ENCODE measurements at regions of chr9 and their contacts with region 1.

Region 1: GRCh38 chr9:70340572-70340971 is 73.9 kb downstream of the KLF9 start:
- DNase-seq: no peak
- H3K4me3 ChIP-seq: no peak overlapping the region
- H3K27ac ChIP-seq: no peak overlapping the region
- H3K4me1 ChIP-seq: peaks cover 0 to 3% (median 0%) of the 10 kb centered on the region in 4 donors
- H3K27me3 ChIP-seq: no peaks in the 10 kb centered on the region
- CTCF ChIP-seq: peak; percentile 53 to 77 (median 60)
- EP300 ChIP-seq: no peak
- POLR2A ChIP-seq: no peak

Region 2: DNA sequence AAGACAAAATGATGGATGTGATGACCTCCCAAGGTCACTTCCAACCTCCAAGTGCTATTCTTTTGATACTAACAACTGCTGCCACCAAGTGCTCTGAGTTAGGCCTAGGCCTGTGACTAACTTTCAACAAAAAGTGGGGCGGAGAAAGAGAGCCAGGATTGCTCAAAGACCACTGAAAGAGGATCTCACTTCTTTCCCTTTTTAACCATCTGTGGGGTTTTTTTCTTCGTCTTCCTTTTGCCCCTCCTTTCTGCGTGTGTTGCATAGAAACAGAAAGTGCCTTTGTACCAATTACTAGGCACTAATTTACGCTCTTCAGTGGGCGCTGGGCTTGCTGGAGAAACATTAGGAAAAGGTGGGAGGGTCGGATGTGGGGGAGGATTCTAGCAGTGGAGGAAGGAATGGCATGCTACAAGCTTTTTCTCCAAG is 65.9 kb after region 1 on chr9:
- in situ Hi-C with region 1: loop called in 2 of 4 experiments (anchors 10 kb)
- intact Hi-C with region 1: no loop called
- DNase-seq: peak; percentile 33
- H3K4me3 ChIP-seq: peak overlapping the region in 1 of 4 donors; percentile 24
- H3K27ac ChIP-seq: peak overlapping the region; percentile 81 to 86 (median 82)
- H3K4me1 ChIP-seq: peaks cover 44 to 92% (median 85%) of the 10 kb centered on the region in 4 donors
- H3K27me3 ChIP-seq: no peaks in the 10 kb centered on the region
- CTCF ChIP-seq: no peak
- EP300 ChIP-seq: no peak
- POLR2A ChIP-seq: no peak

Region 3: GRCh38 chr9:70609542-70610286 is 269.1 kb after region 1 on chr9:
- in situ Hi-C with region 1: loop called in 3 of 4 experiments (anchors 5 to 10 kb)
- intact Hi-C with region 1: loop called (anchors 5 kb)
- DNase-seq: peak; percentile 21
- H3K4me3 ChIP-seq: no peak overlapping the region
- H3K27ac ChIP-seq: no peak overlapping the region
- H3K4me1 ChIP-seq: peaks cover 0 to 4% (median 0%) of the 10 kb centered on the region in 4 donors
- H3K27me3 ChIP-seq: no peaks in the 10 kb centered on the region
- CTCF ChIP-seq: no peak
- EP300 ChIP-seq: no peak
- POLR2A ChIP-seq: no peak